GM12878 (cell line): ENCODE measurements at regions of chr2 and their contacts with region 1.

Region 1: DNA sequence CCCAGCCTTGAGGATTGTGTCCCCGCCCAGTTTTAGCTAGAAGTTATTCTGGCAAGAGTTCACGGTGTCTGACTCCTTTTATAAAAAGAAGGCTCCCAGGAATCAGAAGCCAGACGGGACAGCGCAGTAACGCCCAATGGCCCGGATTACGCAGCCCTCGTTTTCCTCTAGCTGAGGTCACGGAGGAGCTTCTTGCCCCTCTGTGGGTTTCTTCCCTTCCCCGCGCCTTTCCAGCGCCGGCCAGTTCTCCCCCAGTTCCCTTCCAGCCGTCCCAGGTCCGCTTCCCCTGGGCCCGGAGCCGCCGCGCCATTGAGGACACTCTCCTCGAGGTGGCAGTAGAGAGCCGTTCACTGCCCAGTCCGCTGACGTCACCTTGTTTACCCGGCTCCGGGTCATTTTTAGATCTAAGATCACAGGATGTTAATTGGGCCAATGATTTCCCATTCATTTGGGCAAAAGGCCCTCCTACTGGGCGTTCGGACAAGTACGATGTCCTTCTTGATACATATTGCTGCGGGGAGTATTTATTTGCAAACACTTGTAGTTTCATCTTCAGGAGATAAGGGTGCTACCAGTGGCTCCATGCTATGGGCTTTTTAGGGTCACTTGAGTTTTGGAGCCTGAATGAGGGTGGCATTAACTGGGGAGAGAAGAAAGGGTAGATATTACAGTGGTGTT is 81.5 kb upstream of the PPM1B start:
- DNase-seq: no peak
- ATAC-seq: peak; percentile 79
- H3K4me3 ChIP-seq: peak overlapping the region; percentile 61; the same call in 1 of the 2 replicates
- H3K27ac ChIP-seq: no peak overlapping the region
- H3K4me1 ChIP-seq: peaks cover 13% of the 10 kb centered on the region
- H3K27me3 ChIP-seq: no peaks in the 10 kb centered on the region
- CTCF ChIP-seq: peak; percentile 93 to 97 (median 96); a peak in 5 of 6 replicates
- EP300 ChIP-seq: no peak
- POLR2A ChIP-seq: no peak
- RAD21 ChIP-seq: peak; percentile 95

Region 2: DNA sequence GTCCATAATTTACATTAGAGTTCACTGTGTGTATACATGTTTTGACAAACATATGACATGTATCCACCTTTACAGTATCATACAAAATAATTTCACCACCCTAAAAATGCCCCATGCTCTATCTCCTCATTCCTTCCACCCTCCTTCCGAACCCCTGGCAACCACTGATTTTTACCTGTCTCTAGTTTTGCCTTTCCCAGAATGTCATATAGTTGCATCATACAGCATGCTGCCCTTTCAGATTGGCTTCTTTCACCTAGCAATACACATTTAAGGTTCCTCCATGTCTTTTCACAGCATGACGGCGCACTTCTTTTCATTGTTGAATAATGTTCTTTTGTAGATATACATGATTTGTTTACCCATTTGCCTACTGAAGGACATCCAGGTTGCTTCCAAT is 101.8 kb before region 1 on chr2:
- CTCF ChIA-PET with region 1: no interaction called
- POLR2A ChIA-PET with region 1: no interaction called
- RAD21 ChIA-PET with region 1: no interaction called
- SMC1A ChIA-PET with region 1: no interaction called
- in situ Hi-C with region 1: no loop called
- intact Hi-C with region 1: no loop called
- DNase-seq: no peak
- ATAC-seq: no peak; the same call in 2 of the 3 replicates
- H3K4me3 ChIP-seq: no peak overlapping the region
- H3K27ac ChIP-seq: no peak overlapping the region
- H3K4me1 ChIP-seq: no peaks in the 10 kb centered on the region
- H3K27me3 ChIP-seq: no peaks in the 10 kb centered on the region
- CTCF ChIP-seq: no peak
- EP300 ChIP-seq: no peak
- POLR2A ChIP-seq: no peak
- RAD21 ChIP-seq: no peak

Region 3: GRCh38 chr2:44107085-44107740 is 20.0 kb after region 1 on chr2:
- CTCF ChIA-PET with region 1: interaction called, 16 read pairs
- POLR2A ChIA-PET with region 1: no interaction called
- RAD21 ChIA-PET with region 1: interaction called, 13 read pairs
- SMC1A ChIA-PET with region 1: interaction called, 17 read pairs
- in situ Hi-C with region 1: no loop called
- intact Hi-C with region 1: no loop called
- DNase-seq: peak; percentile 47
- ATAC-seq: peak; percentile 79
- H3K4me3 ChIP-seq: no peak overlapping the region
- H3K27ac ChIP-seq: no peak overlapping the region
- H3K4me1 ChIP-seq: peaks cover 10% of the 10 kb centered on the region
- H3K27me3 ChIP-seq: no peaks in the 10 kb centered on the region
- CTCF ChIP-seq: no peak
- EP300 ChIP-seq: no peak
- POLR2A ChIP-seq: no peak
- RAD21 ChIP-seq: no peak

Region 4: GRCh38 chr2:44191739-44192138 is 104.6 kb after region 1 on chr2:
- CTCF ChIA-PET with region 1: interaction called, 7 read pairs
- POLR2A ChIA-PET with region 1: no interaction called
- RAD21 ChIA-PET with region 1: interaction called, 5 read pairs
- SMC1A ChIA-PET with region 1: interaction called, 13 read pairs
- in situ Hi-C with region 1: no loop called
- intact Hi-C with region 1: no loop called
- DNase-seq: peak; percentile 42
- ATAC-seq: peak; percentile 94
- H3K4me3 ChIP-seq: peak overlapping the region; percentile 37; the same call in 1 of the 2 replicates
- H3K27ac ChIP-seq: peak overlapping the region; percentile 80
- H3K4me1 ChIP-seq: peaks cover 43% of the 10 kb centered on the region
- H3K27me3 ChIP-seq: no peaks in the 10 kb centered on the region
- CTCF ChIP-seq: no peak
- EP300 ChIP-seq: peak; percentile 40 to 53; a peak in 1 of 4 replicates
- POLR2A ChIP-seq: no peak
- RAD21 ChIP-seq: no peak

Region 5: DNA sequence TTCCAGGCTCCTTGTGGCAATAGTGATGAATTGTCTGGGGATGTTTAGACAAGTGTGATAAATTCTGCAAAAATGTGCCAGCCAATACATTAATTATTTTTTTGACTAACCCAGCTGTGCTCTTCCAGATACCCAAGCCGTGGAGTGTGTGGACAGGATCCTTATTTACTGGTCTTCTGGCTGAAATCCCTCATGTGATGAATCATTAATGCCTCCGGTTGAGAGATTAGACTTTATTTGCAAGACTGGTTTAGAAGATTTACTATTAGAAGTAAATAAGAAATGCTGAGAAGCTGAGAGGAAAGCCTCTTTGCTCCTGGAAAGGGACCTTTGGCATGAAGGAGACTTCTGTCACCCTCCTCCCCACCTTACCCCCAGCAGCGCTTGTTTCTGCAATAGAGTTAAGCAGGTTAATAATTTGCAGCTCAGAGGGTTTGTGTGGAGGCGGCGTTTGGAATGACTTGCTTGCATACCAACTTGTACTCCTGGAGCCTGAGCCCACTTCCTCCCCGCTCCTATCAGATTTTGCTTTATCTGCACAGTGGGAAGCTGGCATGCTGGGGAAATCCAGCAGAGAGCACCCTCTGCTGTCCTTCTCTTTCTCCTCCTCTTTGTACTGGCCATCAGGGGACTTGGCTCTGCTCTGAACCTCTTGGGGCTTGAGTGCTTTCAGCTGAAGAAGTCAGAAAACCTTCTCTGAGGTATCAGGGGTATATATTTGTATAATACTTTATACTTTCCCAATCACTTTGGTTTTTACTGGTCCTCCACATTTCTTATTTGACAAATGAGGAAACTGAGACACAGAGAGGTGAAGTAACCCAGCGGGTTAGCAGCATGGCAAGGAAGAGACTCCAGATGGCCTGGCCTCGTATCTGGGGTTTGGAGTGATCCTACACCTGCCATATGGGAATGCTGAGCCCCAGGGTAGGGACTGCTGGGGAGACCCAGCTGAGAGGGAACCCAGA is 204.4 kb after region 1 on chr2:
- CTCF ChIA-PET with region 1: interaction called, 22 read pairs
- POLR2A ChIA-PET with region 1: no interaction called
- RAD21 ChIA-PET with region 1: interaction called, 3 read pairs
- SMC1A ChIA-PET with region 1: interaction called, 11 read pairs
- in situ Hi-C with region 1: no loop called
- intact Hi-C with region 1: loop called (anchors 1 kb)
- DNase-seq: no peak
- ATAC-seq: peak; percentile 71
- H3K4me3 ChIP-seq: no peak overlapping the region
- H3K27ac ChIP-seq: no peak overlapping the region
- H3K4me1 ChIP-seq: no peaks in the 10 kb centered on the region
- H3K27me3 ChIP-seq: no peaks in the 10 kb centered on the region; a peak in 1 of 4 replicates
- CTCF ChIP-seq: peak; percentile 8 to 51 (median 37); a peak in 3 of 6 replicates
- EP300 ChIP-seq: no peak
- POLR2A ChIP-seq: no peak
- RAD21 ChIP-seq: peak; percentile 45

Region 6: GRCh38 chr2:44392338-44392943 is 305.3 kb after region 1 on chr2:
- CTCF ChIA-PET with region 1: interaction called, 14 read pairs
- POLR2A ChIA-PET with region 1: no interaction called
- RAD21 ChIA-PET with region 1: interaction called, 3 read pairs
- SMC1A ChIA-PET with region 1: interaction called, 8 read pairs
- in situ Hi-C with region 1: no loop called
- intact Hi-C with region 1: no loop called
- DNase-seq: no peak
- ATAC-seq: peak; percentile 47; the same call in 2 of the 3 replicates
- H3K4me3 ChIP-seq: no peak overlapping the region
- H3K27ac ChIP-seq: no peak overlapping the region
- H3K4me1 ChIP-seq: no peaks in the 10 kb centered on the region
- H3K27me3 ChIP-seq: no peaks in the 10 kb centered on the region
- CTCF ChIP-seq: peak; percentile 41 to 56 (median 50); a peak in 5 of 6 replicates
- EP300 ChIP-seq: no peak
- POLR2A ChIP-seq: no peak
- RAD21 ChIP-seq: peak; percentile 67

Region 7: DNA sequence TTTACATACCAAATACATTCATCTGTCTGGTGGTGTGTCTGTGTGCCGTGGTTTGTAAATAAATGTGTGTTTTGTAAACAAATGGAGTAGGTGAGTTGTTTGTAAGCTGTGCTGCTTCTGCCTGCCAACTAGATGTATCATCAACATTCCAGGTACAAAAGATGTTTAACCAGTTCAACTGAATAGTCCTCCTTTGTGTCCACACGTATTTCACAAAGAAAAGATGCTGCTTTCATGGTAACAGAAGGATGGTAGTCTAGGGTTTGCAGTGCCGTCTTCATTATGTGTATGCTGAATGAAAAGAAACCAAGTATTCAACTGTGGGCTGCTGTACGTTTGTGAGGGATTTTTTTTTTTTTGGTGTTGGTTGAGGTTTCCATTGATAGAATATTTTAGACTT is 346.7 kb after region 1 on chr2:
- CTCF ChIA-PET with region 1: no interaction called
- POLR2A ChIA-PET with region 1: no interaction called
- RAD21 ChIA-PET with region 1: no interaction called
- SMC1A ChIA-PET with region 1: no interaction called
- in situ Hi-C with region 1: no loop called
- intact Hi-C with region 1: no loop called
- DNase-seq: no peak
- ATAC-seq: no peak
- H3K4me3 ChIP-seq: no peak overlapping the region
- H3K27ac ChIP-seq: no peak overlapping the region
- H3K4me1 ChIP-seq: no peaks in the 10 kb centered on the region
- H3K27me3 ChIP-seq: no peaks in the 10 kb centered on the region
- CTCF ChIP-seq: no peak
- EP300 ChIP-seq: no peak
- POLR2A ChIP-seq: no peak
- RAD21 ChIP-seq: no peak